HCT116 (cell line): ENCODE measurements at regions of chr3 and their contacts with region 1.

Region 1: DNA sequence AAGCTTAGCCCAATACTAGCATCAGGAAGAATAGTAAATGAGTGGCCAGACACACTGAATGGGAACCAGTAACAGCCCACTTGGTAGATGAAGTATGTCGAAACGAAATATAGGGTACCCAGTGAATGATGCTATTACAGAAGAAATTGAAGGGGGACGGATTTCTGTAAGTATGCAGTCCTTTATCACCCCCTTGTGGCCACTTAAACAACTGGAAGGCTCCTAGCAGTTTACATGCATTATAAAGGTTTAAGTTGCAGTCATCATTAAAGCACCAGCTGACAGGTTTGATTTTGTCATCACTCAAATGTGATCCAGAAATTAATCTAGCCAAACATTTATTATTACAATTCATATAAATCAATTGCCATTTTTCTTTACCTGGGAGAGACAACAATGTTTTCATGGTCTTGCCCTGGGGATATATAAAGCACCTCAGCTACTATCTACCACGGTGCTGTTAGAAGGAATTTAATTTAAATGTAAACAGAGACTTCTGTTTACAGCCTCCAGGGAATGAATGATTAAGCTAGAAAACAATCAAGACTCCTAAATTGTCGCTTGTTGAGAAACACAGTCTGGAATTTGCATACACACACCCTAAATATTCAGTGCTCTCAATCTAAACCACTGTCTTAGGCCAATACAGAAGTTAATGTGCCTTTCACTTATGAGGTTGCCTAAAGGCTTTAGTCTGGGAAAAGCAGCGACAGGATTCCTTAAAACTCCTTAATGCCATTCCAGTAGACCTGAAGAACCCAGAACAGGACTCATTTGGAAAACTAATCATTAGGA is 7.8 kb downstream of the EIF1B start:
- DNase-seq: peak; percentile 60
- ATAC-seq: peak; percentile 88
- H3K4me3 ChIP-seq: no peak overlapping the region
- H3K27ac ChIP-seq: no peak overlapping the region
- H3K4me1 ChIP-seq: no peaks in the 10 kb centered on the region
- H3K27me3 ChIP-seq: no peaks in the 10 kb centered on the region
- CTCF ChIP-seq: peak; percentile 65 to 84 (median 82); a peak in 5 of 6 replicates
- POLR2A ChIP-seq: no peak
- RAD21 ChIP-seq: peak; percentile 85

Region 2: DNA sequence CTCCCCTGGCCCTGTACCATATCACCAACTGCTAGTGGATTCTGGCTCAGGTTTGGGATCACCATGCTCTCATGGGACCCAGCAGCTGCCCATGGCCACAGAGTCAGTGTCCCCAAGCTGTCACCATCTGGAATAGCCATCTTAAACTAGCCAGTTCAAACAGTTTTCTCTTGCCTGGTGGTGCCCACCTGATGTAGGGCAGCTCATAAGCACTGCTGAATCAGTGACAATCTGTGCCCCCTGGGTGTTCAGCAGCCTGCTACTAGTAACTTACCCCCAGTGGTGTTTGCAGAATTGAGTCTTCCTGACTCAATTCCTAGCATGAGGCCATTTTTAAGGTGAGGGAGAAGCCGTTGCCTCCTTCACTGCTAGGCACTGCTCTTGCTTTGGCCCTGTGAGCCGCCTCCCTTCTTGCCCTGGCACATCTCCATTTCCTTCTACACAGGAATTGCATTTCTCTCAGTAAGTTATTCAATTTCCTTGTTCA is 902.8 kb before region 1 on chr3:
- CTCF ChIA-PET with region 1: no interaction called
- POLR2A ChIA-PET with region 1: no interaction called
- RAD21 ChIA-PET with region 1: no interaction called
- intact Hi-C with region 1: loop called (anchors 10 kb)
- DNase-seq: no peak
- ATAC-seq: peak; percentile 31
- H3K4me3 ChIP-seq: no peak overlapping the region
- H3K27ac ChIP-seq: peak overlapping the region; percentile 54
- H3K4me1 ChIP-seq: peaks cover 0 to 26% of the 10 kb centered on the region in 2 experiments; a peak in 2 of 4 replicates
- H3K27me3 ChIP-seq: no peaks in the 10 kb centered on the region
- CTCF ChIP-seq: no peak
- POLR2A ChIP-seq: no peak
- RAD21 ChIP-seq: no peak

Region 3: GRCh38 chr3:39668420-39668819 is 648.8 kb before region 1 on chr3:
- CTCF ChIA-PET with region 1: no interaction called
- POLR2A ChIA-PET with region 1: no interaction called
- RAD21 ChIA-PET with region 1: no interaction called
- intact Hi-C with region 1: loop called (anchors 1 kb)
- DNase-seq: peak; percentile 47
- ATAC-seq: peak; percentile 93
- H3K4me3 ChIP-seq: no peak overlapping the region
- H3K27ac ChIP-seq: no peak overlapping the region
- H3K4me1 ChIP-seq: no peaks in the 10 kb centered on the region
- H3K27me3 ChIP-seq: peaks cover 19% of the 10 kb centered on the region; the same call in 1 of the 2 replicates
- CTCF ChIP-seq: peak; percentile 44 to 80 (median 76); a peak in 5 of 6 replicates
- POLR2A ChIP-seq: no peak
- RAD21 ChIP-seq: peak; percentile 55

Region 4: GRCh38 chr3:39812537-39812936 is 504.7 kb before region 1 on chr3:
- CTCF ChIA-PET with region 1: no interaction called
- POLR2A ChIA-PET with region 1: no interaction called
- RAD21 ChIA-PET with region 1: no interaction called
- intact Hi-C with region 1: loop called (anchors 5 kb)
- DNase-seq: no peak
- ATAC-seq: no peak
- H3K4me3 ChIP-seq: no peak overlapping the region
- H3K27ac ChIP-seq: no peak overlapping the region
- H3K4me1 ChIP-seq: peaks cover 7 to 8% of the 10 kb centered on the region in 2 experiments; a peak in 3 of 4 replicates
- H3K27me3 ChIP-seq: peaks cover 28% of the 10 kb centered on the region; the same call in 1 of the 2 replicates
- CTCF ChIP-seq: peak; percentile 20 to 64 (median 57); a peak in 5 of 6 replicates
- POLR2A ChIP-seq: no peak
- RAD21 ChIP-seq: peak; percentile 40; the same call in 1 of the 2 replicates

Region 5: GRCh38 chr3:40355410-40355809 is 38.2 kb after region 1 on chr3:
- CTCF ChIA-PET with region 1: no interaction called
- POLR2A ChIA-PET with region 1: no interaction called
- RAD21 ChIA-PET with region 1: no interaction called
- intact Hi-C with region 1: no loop called
- DNase-seq: no peak
- ATAC-seq: no peak
- H3K4me3 ChIP-seq: no peak overlapping the region
- H3K27ac ChIP-seq: no peak overlapping the region
- H3K4me1 ChIP-seq: no peaks in the 10 kb centered on the region
- H3K27me3 ChIP-seq: no peaks in the 10 kb centered on the region; the same call in 1 of the 2 replicates
- CTCF ChIP-seq: no peak
- POLR2A ChIP-seq: no peak
- RAD21 ChIP-seq: no peak

Region 6: GRCh38 chr3:41198950-41199865 is 882.0 kb after region 1 on chr3 and contains the start of gene CTNNB1:
- CTCF ChIA-PET with region 1: no interaction called
- POLR2A ChIA-PET with region 1: no interaction called
- RAD21 ChIA-PET with region 1: no interaction called
- intact Hi-C with region 1: loop called (anchors 10 kb)
- DNase-seq: peak; percentile 83
- ATAC-seq: peak; percentile 82
- H3K4me3 ChIP-seq: peak within 1 kb of the TSS; percentile 85 to 91
- H3K27ac ChIP-seq: peak within 1 kb of the TSS; percentile 90
- H3K4me1 ChIP-seq: peaks cover 20 to 32% of the 10 kb centered on the region in 2 experiments
- H3K27me3 ChIP-seq: peaks cover 8% of the 10 kb centered on the region; the same call in 1 of the 2 replicates
- CTCF ChIP-seq: no peak
- POLR2A ChIP-seq: peak; percentile 91
- RAD21 ChIP-seq: peak; percentile 16
- total RNA-seq, gene CTNNB1: 265 TPM